ENCODE measurements at regions of chr9 and their contacts with region 1.

Region 1: DNA sequence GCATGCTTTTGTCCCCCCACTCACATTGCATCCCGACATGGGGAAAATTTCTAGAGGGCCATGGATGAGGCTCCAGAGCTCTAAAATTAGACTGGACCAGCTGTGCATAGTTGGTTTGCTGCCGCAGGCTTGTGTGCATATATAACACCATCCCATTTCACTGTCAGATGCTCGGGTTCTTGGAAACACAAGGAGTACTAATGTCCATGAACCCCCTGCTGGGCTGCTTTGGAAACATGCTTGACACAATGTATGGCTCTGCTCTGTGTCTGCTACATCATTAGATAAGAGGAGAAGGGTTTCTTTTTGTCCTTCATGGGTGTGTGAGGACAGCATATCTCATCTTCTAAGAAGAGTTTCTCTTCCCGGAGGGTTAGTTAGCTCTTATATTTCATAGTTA is 292.1 kb upstream of the RORB start:
- DNase-seq: no peak
- H3K4me3 ChIP-seq: no peak overlapping the region
- H3K27ac ChIP-seq: no peak overlapping the region
- H3K4me1 ChIP-seq: no peaks in the 10 kb centered on the region
- H3K27me3 ChIP-seq: no peaks in the 10 kb centered on the region

Region 2: GRCh38 chr9:74147906-74148305 is 57.1 kb before region 1 on chr9:
- in situ Hi-C with region 1: loop called (anchors 10 kb)
- DNase-seq: no peak
- H3K4me3 ChIP-seq: no peak overlapping the region
- H3K27ac ChIP-seq: no peak overlapping the region
- H3K4me1 ChIP-seq: no peaks in the 10 kb centered on the region
- H3K27me3 ChIP-seq: no peaks in the 10 kb centered on the region

Region 3: GRCh38 chr9:74358959-74359358 is 153.9 kb after region 1 on chr9:
- in situ Hi-C with region 1: no loop called
- DNase-seq: no peak
- H3K4me3 ChIP-seq: no peak overlapping the region
- H3K27ac ChIP-seq: no peak overlapping the region
- H3K4me1 ChIP-seq: no peaks in the 10 kb centered on the region
- H3K27me3 ChIP-seq: no peaks in the 10 kb centered on the region

Region 4: DNA sequence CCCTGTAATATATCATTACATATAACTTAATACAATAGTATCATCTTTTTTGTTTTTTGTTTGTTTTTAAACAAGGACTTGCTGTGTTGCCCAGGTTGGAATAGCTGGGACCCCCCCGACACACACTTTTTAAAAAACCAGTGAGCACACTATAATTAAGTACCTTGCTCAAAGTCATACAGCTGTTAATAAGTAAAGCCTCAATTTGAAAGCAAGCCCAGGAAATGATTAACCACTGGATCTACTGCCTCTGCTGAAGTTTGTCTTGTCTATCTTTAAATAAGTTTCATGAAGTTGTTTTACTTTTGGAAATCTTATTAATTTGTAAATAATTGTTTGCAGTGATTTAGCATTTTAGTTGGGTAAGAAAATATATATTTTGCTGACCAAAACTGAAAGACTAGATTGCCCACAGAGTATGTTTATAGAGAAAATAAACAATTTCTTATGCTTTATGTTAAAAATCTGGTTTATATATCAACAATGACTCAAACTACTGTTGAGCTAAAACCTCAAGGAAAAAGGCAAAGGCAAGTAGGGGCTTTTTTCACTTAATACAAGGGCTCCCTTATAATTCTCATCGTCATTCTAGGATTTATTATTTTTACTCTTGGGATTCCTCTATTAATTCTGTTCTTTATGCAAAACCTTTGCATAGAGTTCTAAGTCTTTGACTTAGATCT is 828.9 kb after region 1 on chr9:
- in situ Hi-C with region 1: no loop called
- DNase-seq: no peak
- H3K4me3 ChIP-seq: no peak overlapping the region
- H3K27ac ChIP-seq: no peak overlapping the region
- H3K4me1 ChIP-seq: peaks cover 11% of the 10 kb centered on the region
- H3K27me3 ChIP-seq: no peaks in the 10 kb centered on the region

Measured in GM23248 (cell line).